CD4-positive, alpha-beta T cell (primary cell): ENCODE measurements at regions of chr11 and their contacts with region 1.

Region 1: DNA sequence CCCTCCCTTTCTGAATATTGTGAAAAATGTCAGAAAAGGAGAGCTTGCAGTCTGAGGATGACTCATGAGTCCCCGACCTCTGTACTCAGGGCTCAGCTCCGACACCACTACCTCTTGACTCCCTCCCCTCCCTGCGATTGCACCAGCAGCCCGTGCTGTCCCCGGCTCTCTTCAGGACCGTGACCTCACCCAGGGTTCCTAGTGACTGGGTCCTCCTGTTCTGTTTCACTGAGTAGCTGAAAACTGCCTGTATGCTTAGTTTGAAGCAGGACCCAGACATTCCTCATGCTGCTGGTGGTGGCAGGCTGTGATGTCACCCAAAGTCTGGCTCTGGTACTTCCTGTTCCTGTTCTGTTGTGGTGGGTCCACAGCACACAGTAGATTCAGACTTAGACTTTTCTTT is 11.7 kb downstream of the PHRF1 start:
- DNase-seq: peak; percentile 40 to 89 (median 71)
- ATAC-seq: peak; percentile 91
- H3K4me3 ChIP-seq: no peak overlapping the region
- H3K4me3 Mint-ChIP-seq: peak overlapping the region; percentile 56
- H3K27ac ChIP-seq: peak overlapping the region; percentile 51 to 77
- H3K27ac Mint-ChIP-seq: peak overlapping the region; percentile 96
- H3K4me1 ChIP-seq: peaks cover 20% of the 10 kb centered on the region
- H3K4me1 Mint-ChIP-seq: peaks cover 22% of the 10 kb centered on the region
- H3K27me3 ChIP-seq: no peaks in the 10 kb centered on the region
- H3K27me3 Mint-ChIP-seq: no peaks in the 10 kb centered on the region
- CTCF ChIP-seq: no peak

Region 2: DNA sequence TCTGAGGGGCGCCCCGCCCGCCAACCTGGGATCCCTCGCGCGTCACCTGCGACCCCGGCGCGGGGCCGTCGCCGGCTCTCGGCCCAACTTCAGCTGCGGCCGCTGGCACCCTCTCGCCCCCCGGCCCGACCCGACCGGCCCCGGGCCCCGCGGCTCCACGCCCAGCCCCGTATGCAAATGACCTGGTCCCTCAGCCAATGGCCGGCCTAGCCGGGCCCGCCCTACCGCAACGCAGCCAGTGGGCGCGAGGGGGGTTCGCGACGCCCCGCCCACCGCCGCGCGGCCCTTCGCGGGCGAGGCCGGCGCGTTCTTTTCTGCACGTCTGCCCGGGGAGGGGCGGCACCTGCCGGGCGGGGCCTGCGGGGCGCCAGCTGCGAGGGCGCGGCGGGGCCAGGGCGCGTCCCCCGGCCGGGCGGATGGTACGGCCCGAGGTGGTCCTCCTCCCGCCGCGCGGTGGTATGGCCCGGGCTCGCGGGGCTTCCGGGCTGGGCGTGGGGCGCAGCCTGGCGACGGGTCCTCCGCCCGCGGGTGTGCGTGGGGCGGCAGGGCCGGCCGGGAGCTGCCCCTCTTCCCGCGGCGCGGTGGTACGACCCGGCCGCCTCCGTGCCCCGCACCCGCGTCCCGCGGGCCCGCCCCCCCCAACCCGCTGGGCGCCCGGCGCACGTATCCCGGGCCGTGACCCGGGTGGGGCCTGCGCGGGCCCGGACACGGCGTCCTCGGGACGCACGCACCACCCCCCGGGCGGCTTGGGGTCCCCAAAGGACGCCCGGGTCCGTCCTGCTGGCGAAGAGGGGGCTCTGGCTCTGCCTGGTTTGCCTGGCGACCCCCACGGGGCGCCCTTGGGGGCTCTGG is 19.4 kb before region 1 on chr11:
- CTCF ChIA-PET with region 1: no interaction called
- POLR2A ChIA-PET with region 1: no interaction called
- intact Hi-C with region 1: loop called in 1 of 2 experiments (anchors 2 kb)
- DNase-seq: peak; percentile 81 to 97 (median 90)
- ATAC-seq: peak; percentile 91
- H3K4me3 ChIP-seq: peak overlapping the region; percentile 70
- H3K4me3 Mint-ChIP-seq: peak overlapping the region; percentile 82
- H3K27ac ChIP-seq: peak overlapping the region; percentile 17 to 69
- H3K27ac Mint-ChIP-seq: no peak overlapping the region
- H3K4me1 ChIP-seq: peaks cover 14% of the 10 kb centered on the region
- H3K4me1 Mint-ChIP-seq: peaks cover 4% of the 10 kb centered on the region
- H3K27me3 ChIP-seq: no peaks in the 10 kb centered on the region
- H3K27me3 Mint-ChIP-seq: no peaks in the 10 kb centered on the region
- CTCF ChIP-seq: no peak